Naive thymus-derived CD4-positive, alpha-beta T cell (primary cell): ENCODE measurements at regions of chr3 and their contacts with region 1.

Region 1: GRCh38 chr3:154323891-154324738 is at the start of gene DHX36:
- DNase-seq: peak; percentile 73 to 92 (median 89)
- ATAC-seq: peak; percentile 94
- H3K4me3 ChIP-seq: peak within 1 kb of the TSS; percentile 70
- H3K4me3 Mint-ChIP-seq: peak within 1 kb of the TSS in 5 of 10 donors; percentile 92 to 96 (median 96)
- H3K27ac ChIP-seq: peak within 1 kb of the TSS; percentile 94
- H3K27ac Mint-ChIP-seq: peak within 1 kb of the TSS in 8 of 9 donors; percentile 96 to 100 (median 99)
- H3K4me1 ChIP-seq: peaks cover 38 to 43% of the 10 kb centered on the region in 2 donors
- H3K4me1 Mint-ChIP-seq: peaks cover 4 to 23% (median 20%) of the 10 kb centered on the region in 7 donors
- H3K27me3 ChIP-seq: no peaks in the 10 kb centered on the region
- H3K27me3 Mint-ChIP-seq: peaks cover 0 to under 1% (median 0%) of the 10 kb centered on the region in 5 donors
- total RNA-seq, gene DHX36: 73.4 to 101 (median 91.3) TPM

Region 2: DNA sequence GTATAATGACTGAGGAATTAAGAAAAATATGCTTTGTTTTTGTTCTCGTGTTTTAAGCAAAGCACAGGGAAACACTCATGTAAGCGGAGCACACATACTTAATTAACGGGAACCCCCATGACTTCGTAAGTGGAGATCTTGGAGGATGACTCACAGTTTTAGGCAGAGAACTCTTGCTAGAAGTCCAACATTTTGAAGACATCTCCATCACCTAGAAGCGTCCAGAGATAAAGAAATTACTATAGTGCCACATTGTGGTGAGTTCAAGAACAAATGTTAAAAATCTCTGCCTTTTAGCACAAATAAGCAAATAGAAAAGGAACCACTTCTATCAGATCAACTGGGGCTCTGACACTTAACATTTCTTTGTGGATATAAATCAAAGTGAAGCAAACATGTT is 397.0 kb before region 1 on chr3:
- CTCF ChIA-PET with region 1: no interaction called
- POLR2A ChIA-PET with region 1: no interaction called
- intact Hi-C with region 1: no loop called
- DNase-seq: no peak
- ATAC-seq: no peak
- H3K4me3 ChIP-seq: no peak overlapping the region
- H3K4me3 Mint-ChIP-seq: no peak overlapping the region
- H3K27ac ChIP-seq: no peak overlapping the region
- H3K27ac Mint-ChIP-seq: no peak overlapping the region
- H3K4me1 ChIP-seq: no peaks in the 10 kb centered on the region
- H3K4me1 Mint-ChIP-seq: no peaks in the 10 kb centered on the region
- H3K27me3 ChIP-seq: no peaks in the 10 kb centered on the region
- H3K27me3 Mint-ChIP-seq: peaks cover 0 to 21% (median 10%) of the 10 kb centered on the region in 5 donors

Region 3: DNA sequence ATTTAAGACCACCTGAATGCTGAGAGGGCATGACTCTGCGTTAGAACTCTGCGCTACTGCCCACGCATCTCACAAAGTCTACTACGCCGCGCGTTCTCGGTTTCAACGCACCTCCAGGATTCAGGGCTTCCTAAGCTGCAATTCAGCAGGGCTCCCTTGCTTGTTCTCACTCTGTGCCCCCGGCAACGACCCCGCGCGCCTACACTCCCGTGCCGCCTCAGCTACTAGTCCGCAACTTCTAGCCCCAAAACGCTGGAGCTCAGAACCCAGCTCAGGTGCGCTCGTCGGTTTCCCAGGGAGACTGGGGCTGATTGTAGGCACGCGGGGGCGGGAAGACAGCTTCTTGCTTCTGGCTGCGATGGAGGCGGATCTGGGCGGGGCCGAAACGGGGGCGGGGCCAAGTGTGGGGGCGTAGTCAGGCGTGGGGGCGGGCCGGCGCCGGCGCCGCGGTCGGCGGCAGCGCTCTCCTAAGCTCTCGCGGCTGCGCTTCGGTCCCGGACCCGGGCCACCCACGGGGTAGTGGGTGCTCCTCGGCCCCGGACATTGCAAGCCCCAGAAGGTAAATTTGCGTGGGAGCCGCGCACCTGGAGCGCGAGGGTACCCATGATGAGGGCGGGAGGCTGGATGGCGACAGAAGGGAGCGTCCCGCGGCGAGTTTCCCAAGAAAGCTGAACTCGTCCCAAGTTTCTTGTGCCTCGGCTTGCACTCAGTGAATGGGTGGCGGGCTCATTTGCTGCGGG is 203.0 kb before region 1 on chr3 and contains the start of gene ARHGEF26:
- CTCF ChIA-PET with region 1: interaction called, 3 read pairs
- POLR2A ChIA-PET with region 1: no interaction called
- intact Hi-C with region 1: loop called (anchors 5 kb)
- DNase-seq: peak; percentile 7 to 73 (median 59)
- ATAC-seq: peak; percentile 89
- H3K4me3 ChIP-seq: peak within 1 kb of the TSS; percentile 57
- H3K4me3 Mint-ChIP-seq: peak within 1 kb of the TSS; percentile 68 to 91 (median 82)
- H3K27ac ChIP-seq: no peak within 1 kb of the TSS
- H3K27ac Mint-ChIP-seq: peak within 1 kb of the TSS in 1 of 9 donors; percentile 28
- H3K4me1 ChIP-seq: no peaks in the 10 kb centered on the region
- H3K4me1 Mint-ChIP-seq: peaks cover 11 to 24% (median 18%) of the 10 kb centered on the region in 7 donors
- H3K27me3 ChIP-seq: peaks cover 0 to 6% of the 10 kb centered on the region in 2 donors
- H3K27me3 Mint-ChIP-seq: peaks cover 60 to 82% (median 69%) of the 10 kb centered on the region in 5 donors
- total RNA-seq, gene ARHGEF26: 0.08 to 0.13 TPM in 2 of 5 experiments, not detected in the others

Region 4: DNA sequence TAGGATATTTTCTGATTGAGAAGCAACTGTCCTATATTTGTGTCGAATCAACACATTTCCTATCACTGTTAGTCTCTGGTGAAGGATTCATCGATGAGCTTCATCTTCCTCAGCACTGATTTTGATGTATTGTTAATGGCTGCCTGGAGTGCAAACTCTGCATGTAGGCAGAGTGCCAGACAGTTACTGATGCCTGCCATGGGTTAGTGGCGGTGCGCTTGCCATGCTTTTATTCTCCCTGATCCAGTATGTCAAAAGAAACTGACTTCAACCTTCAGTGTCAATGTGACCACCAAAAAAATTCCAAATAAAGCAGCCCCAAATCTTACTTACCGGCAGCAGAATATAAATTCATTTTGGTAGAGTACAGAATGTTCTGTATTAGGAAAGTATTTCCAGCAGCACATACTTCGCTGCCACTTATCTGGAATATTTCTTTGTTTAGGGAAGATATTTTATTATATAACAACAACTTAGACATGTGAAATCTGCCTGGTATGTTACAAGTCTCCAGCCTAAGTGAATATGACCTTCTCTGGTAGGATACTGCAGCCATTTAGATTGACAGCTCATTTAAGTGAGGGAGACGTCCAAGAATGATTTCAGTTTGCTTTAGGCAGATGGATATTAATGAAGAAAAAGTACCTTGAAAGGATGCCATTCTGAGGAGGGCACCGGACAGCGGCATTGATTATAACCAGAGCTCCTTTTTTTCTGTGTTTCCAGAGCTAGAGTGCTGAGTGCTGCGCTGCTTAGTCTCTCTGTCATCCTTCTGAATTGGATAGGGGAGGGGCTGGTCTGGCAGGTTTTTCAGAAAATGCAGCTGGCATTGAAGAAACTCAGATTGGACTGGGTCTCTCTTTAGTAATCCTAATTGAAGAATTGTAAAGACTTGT is 143.0 kb before region 1 on chr3:
- CTCF ChIA-PET with region 1: no interaction called
- POLR2A ChIA-PET with region 1: no interaction called
- intact Hi-C with region 1: no loop called
- DNase-seq: no peak
- ATAC-seq: no peak
- H3K4me3 ChIP-seq: no peak overlapping the region
- H3K4me3 Mint-ChIP-seq: no peak overlapping the region
- H3K27ac ChIP-seq: no peak overlapping the region
- H3K27ac Mint-ChIP-seq: no peak overlapping the region
- H3K4me1 ChIP-seq: no peaks in the 10 kb centered on the region
- H3K4me1 Mint-ChIP-seq: peaks cover 0 to 2% (median 0%) of the 10 kb centered on the region in 7 donors
- H3K27me3 ChIP-seq: no peaks in the 10 kb centered on the region
- H3K27me3 Mint-ChIP-seq: peaks cover 0 to 24% (median 14%) of the 10 kb centered on the region in 5 donors

Region 5: GRCh38 chr3:154304116-154304786 is 19.9 kb before region 1 on chr3:
- CTCF ChIA-PET with region 1: no interaction called
- POLR2A ChIA-PET with region 1: no interaction called
- intact Hi-C with region 1: loop called (anchors 2 kb)
- DNase-seq: no peak
- ATAC-seq: no peak
- H3K4me3 ChIP-seq: no peak overlapping the region
- H3K4me3 Mint-ChIP-seq: no peak overlapping the region
- H3K27ac ChIP-seq: no peak overlapping the region
- H3K27ac Mint-ChIP-seq: no peak overlapping the region
- H3K4me1 ChIP-seq: no peaks in the 10 kb centered on the region
- H3K4me1 Mint-ChIP-seq: peaks cover 5 to 17% (median 13%) of the 10 kb centered on the region in 7 donors
- H3K27me3 ChIP-seq: no peaks in the 10 kb centered on the region
- H3K27me3 Mint-ChIP-seq: no peaks in the 10 kb centered on the region